HCT116 (cell line): ENCODE measurements at regions of chr3 and their contacts with region 1.

Region 1: DNA sequence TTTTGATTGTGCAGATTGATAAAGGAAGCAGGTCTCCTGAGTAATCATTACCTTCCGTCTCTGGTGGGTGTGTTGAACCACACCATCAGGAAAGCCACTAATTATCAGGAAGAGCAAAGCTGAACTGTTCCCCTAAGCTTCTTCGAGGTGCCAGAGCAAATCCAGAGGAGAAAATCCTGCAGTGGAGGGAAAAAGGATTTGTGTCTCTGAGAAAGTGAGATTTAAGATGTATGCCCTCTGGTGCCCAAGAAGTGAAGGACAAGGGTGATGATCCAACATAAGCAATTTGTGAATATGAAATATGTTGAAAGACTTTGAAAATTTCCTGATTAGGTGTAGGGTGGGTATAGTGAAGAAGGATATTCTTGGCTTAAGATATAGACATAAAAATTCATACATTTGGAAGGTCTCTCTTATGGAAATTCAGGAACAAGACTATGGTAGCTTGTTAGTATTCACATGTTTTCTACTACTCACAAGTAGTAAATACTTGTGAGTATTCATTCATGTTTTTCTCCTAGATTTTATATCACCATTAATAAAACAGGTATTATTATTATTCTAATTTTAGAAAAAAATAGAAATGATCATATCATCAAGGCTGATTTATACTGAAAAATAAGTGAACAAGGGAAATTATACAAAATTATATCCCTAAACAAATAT is 34.8 kb downstream of the COMMD2 start:
- DNase-seq: peak; percentile 65
- ATAC-seq: peak; percentile 83
- H3K4me3 ChIP-seq: no peak overlapping the region
- H3K27ac ChIP-seq: no peak overlapping the region
- H3K4me1 ChIP-seq: peaks cover 2 to 9% of the 10 kb centered on the region in 2 experiments; a peak in 3 of 4 replicates
- H3K27me3 ChIP-seq: no peaks in the 10 kb centered on the region
- CTCF ChIP-seq: peak; percentile 66 to 83 (median 75)
- POLR2A ChIP-seq: no peak
- RAD21 ChIP-seq: peak; percentile 83

Region 2: GRCh38 chr3:149512209-149512782 is 205.2 kb before region 1 on chr3:
- CTCF ChIA-PET with region 1: interaction called, 3 read pairs
- POLR2A ChIA-PET with region 1: no interaction called
- RAD21 ChIA-PET with region 1: no interaction called
- intact Hi-C with region 1: loop called (anchors 1 kb)
- DNase-seq: peak; percentile 50
- ATAC-seq: peak; percentile 99
- H3K4me3 ChIP-seq: no peak overlapping the region
- H3K27ac ChIP-seq: no peak overlapping the region
- H3K4me1 ChIP-seq: no peaks in the 10 kb centered on the region
- H3K27me3 ChIP-seq: no peaks in the 10 kb centered on the region
- CTCF ChIP-seq: peak; percentile 80 to 94 (median 92)
- POLR2A ChIP-seq: no peak
- RAD21 ChIP-seq: peak; percentile 96

Region 3: GRCh38 chr3:149536429-149536828 is 181.1 kb before region 1 on chr3:
- CTCF ChIA-PET with region 1: interaction called, 11 read pairs
- POLR2A ChIA-PET with region 1: no interaction called
- RAD21 ChIA-PET with region 1: interaction called in 1 of 2 experiments, 3 read pairs
- intact Hi-C with region 1: loop called (anchors 5 kb)
- DNase-seq: no peak
- ATAC-seq: no peak
- H3K4me3 ChIP-seq: no peak overlapping the region
- H3K27ac ChIP-seq: no peak overlapping the region
- H3K4me1 ChIP-seq: peaks cover 0 to 9% of the 10 kb centered on the region in 2 experiments; a peak in 1 of 4 replicates
- H3K27me3 ChIP-seq: no peaks in the 10 kb centered on the region
- CTCF ChIP-seq: no peak
- POLR2A ChIP-seq: no peak
- RAD21 ChIP-seq: no peak